OCI-LY7 (cell line): ENCODE measurements at regions of chr17 and their contacts with region 1.

Region 1: DNA sequence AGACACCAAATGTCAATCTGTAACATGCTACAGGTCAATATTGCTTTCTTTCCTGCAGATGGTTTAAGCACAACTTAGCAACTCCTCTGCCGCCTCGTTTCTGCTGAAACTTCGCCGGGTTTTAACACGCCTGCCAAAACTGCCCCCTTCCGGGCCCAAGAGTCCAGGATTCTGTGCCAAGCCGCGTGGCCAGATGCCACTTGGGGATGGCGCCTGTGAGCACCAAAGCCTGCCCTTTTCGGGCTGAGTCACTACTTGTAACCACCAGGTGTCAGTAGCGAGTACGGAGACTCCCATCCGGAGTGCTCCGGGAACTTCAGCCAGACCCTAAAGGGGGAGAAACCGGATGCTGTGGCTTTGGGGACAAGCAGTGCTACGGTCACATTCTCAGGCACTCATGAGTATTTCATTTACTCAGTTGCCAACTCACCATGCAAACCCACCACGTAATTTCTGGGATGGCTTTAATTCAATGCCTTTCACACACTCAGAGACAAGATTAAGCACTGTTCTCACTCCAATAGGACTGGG is 7.8 kb downstream of the PMP22 start:
- DNase-seq: peak; percentile 57
- H3K4me3 ChIP-seq: no peak overlapping the region
- H3K27ac ChIP-seq: no peak overlapping the region
- H3K4me1 ChIP-seq: no peaks in the 10 kb centered on the region
- CTCF ChIP-seq: peak; percentile 91

Region 2: DNA sequence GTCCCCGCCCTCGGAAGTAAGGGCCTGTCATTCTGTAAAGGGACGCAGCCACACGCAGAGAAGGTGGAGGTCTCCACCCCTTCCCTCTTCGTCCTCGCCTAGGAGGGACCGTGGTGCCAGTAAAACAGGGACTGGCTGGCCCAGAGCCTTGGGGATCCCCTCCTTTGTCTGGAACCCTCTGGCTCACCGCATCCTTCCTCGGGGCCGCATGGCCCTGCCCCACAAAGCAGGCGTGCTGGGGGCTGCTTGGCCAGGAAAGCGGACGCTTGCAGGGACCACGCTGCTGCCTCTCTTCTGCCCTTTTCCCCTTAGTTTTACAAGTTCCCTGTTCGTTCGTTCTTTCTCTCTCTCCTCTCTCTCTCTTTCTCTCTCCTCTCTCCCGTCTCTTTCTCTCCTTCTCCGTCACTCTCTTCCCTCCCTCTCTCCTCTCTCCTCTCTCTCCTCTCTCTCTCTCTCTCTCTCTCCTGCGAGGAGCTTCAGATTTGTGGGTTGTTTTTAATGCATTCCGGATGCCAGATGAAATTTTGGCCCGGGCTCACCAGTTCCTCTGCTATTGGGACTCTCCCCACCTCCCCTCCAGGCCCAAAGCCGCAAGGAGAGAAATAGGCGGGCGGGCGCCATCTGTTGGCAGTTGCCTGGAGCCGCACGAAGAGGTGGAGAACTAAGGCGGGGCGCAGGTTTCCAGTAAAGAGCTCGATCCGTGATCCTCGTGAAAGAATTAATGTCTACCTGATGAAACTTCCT is 245.2 kb after region 1 on chr17:
- CTCF ChIA-PET with region 1: interaction called, 5 read pairs
- POLR2A ChIA-PET with region 1: no interaction called
- intact Hi-C with region 1: loop called (anchors 2 kb)
- DNase-seq: peak; percentile 70
- H3K4me3 ChIP-seq: peak overlapping the region; percentile 25
- H3K27ac ChIP-seq: no peak overlapping the region
- H3K4me1 ChIP-seq: peaks cover 10% of the 10 kb centered on the region
- CTCF ChIP-seq: peak; percentile 94

Region 3: GRCh38 chr17:15999439-16000350 is 742.4 kb after region 1 on chr17 and contains the starts of genes TTC19 and ZSWIM7:
- CTCF ChIA-PET with region 1: no interaction called
- POLR2A ChIA-PET with region 1: no interaction called
- intact Hi-C with region 1: loop called (anchors 2 kb)
- DNase-seq: peak; percentile 96
- H3K4me3 ChIP-seq: peak within 1 kb of the TSS; percentile 94
- H3K27ac ChIP-seq: peak within 1 kb of the TSS; percentile 85
- H3K4me1 ChIP-seq: peaks cover 14% of the 10 kb centered on the region
- CTCF ChIP-seq: no peak
- total RNA-seq, gene TTC19: 42.0 and 57.3 TPM in 2 replicates
- total RNA-seq, gene ZSWIM7: 27.2 and 34.7 TPM in 2 replicates